Caco-2 (cell line): ENCODE measurements at regions of chr3 and their contacts with region 1.

Region 1: GRCh38 chr3:152676810-152677379 is 158.0 kb upstream of the P2RY1 start:
- DNase-seq: no peak
- H3K4me3 ChIP-seq: no peak overlapping the region
- H3K4me3 Mint-ChIP-seq: no peak overlapping the region
- H3K27ac Mint-ChIP-seq: no peak overlapping the region
- H3K4me1 ChIP-seq: no peaks in the 10 kb centered on the region
- H3K4me1 Mint-ChIP-seq: no peaks in the 10 kb centered on the region
- H3K27me3 ChIP-seq: no peaks in the 10 kb centered on the region
- H3K27me3 Mint-ChIP-seq: peaks cover 10% of the 10 kb centered on the region
- CTCF ChIP-seq: no peak

Region 2: DNA sequence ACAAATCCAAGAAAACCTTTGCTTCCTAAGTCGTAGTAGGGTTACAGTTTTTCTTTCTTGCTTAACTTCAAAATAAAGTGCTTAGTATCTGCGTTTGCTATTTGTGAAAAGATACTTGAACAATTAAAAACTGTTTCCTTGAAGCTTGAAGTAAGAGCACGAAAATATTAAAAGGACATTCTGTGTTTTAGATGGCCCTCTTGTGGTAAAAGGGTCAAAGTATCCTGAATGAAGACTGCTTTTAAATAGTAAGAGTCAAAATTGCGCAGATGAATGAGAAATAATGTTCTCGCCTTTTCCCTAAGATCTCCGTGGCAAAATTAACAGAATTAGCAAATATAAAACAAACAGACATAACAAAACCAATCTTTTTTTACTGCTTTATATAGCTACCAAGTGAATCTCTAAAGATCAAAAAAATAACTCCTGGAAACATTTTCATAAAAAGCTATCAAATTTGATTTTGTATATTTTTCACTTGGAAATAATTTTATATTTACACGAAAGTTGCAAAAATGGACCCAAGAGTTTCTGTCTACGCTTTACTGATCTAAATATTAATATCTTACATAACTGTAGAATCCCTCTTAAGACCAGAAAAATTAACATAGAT is 232.8 kb before region 1 on chr3:
- CTCF ChIA-PET with region 1: no interaction called
- POLR2A ChIA-PET with region 1: no interaction called
- intact Hi-C with region 1: no loop called
- DNase-seq: peak in 1 of 2 experiments; percentile 12
- H3K4me3 ChIP-seq: no peak overlapping the region
- H3K4me3 Mint-ChIP-seq: no peak overlapping the region
- H3K27ac Mint-ChIP-seq: no peak overlapping the region
- H3K4me1 ChIP-seq: no peaks in the 10 kb centered on the region
- H3K4me1 Mint-ChIP-seq: no peaks in the 10 kb centered on the region
- H3K27me3 ChIP-seq: no peaks in the 10 kb centered on the region
- H3K27me3 Mint-ChIP-seq: no peaks in the 10 kb centered on the region
- CTCF ChIP-seq: peak; percentile 60 to 63

Region 3: GRCh38 chr3:152556731-152557254 is 120.1 kb before region 1 on chr3:
- CTCF ChIA-PET with region 1: no interaction called
- POLR2A ChIA-PET with region 1: no interaction called
- intact Hi-C with region 1: no loop called
- DNase-seq: no peak
- H3K4me3 ChIP-seq: no peak overlapping the region
- H3K4me3 Mint-ChIP-seq: no peak overlapping the region
- H3K27ac Mint-ChIP-seq: no peak overlapping the region
- H3K4me1 ChIP-seq: no peaks in the 10 kb centered on the region
- H3K4me1 Mint-ChIP-seq: no peaks in the 10 kb centered on the region
- H3K27me3 ChIP-seq: no peaks in the 10 kb centered on the region
- H3K27me3 Mint-ChIP-seq: no peaks in the 10 kb centered on the region
- CTCF ChIP-seq: no peak

Region 4: DNA sequence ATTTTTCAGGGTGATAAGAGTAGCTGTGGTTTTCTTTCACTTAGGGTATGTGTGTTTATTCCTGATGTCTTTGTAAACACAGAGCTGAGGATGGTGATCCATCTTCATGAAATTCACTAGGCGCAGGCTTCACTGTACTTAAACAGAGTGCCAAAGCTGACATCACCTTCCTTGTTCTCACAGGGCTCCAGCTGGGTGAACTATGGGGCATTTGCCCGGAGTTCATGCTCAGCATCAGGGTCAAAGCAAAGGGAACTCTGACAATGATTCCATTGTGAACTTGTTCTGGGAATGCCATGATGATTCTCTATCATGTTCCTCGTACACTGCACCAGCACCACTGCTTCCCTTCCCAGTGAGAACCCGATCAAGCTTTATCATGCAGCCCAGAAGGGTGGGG is 26.7 kb before region 1 on chr3:
- CTCF ChIA-PET with region 1: no interaction called
- POLR2A ChIA-PET with region 1: no interaction called
- intact Hi-C with region 1: loop called (anchors 1 kb)
- DNase-seq: no peak
- H3K4me3 ChIP-seq: no peak overlapping the region
- H3K4me3 Mint-ChIP-seq: no peak overlapping the region
- H3K27ac Mint-ChIP-seq: no peak overlapping the region
- H3K4me1 ChIP-seq: 0 out of 2 replicates have a peak, but pooled peaks cover 5% of the 10 kb centered on the region
- H3K4me1 Mint-ChIP-seq: no peaks in the 10 kb centered on the region
- H3K27me3 ChIP-seq: no peaks in the 10 kb centered on the region
- H3K27me3 Mint-ChIP-seq: no peaks in the 10 kb centered on the region
- CTCF ChIP-seq: no peak